ENCODE measurements at regions of chr1 and their contacts with region 1.

Region 1: GRCh38 chr1:22889213-22889827 is 83.3 kb downstream of the LACTBL1 start:
- DNase-seq: peak; percentile 44

Region 2: DNA sequence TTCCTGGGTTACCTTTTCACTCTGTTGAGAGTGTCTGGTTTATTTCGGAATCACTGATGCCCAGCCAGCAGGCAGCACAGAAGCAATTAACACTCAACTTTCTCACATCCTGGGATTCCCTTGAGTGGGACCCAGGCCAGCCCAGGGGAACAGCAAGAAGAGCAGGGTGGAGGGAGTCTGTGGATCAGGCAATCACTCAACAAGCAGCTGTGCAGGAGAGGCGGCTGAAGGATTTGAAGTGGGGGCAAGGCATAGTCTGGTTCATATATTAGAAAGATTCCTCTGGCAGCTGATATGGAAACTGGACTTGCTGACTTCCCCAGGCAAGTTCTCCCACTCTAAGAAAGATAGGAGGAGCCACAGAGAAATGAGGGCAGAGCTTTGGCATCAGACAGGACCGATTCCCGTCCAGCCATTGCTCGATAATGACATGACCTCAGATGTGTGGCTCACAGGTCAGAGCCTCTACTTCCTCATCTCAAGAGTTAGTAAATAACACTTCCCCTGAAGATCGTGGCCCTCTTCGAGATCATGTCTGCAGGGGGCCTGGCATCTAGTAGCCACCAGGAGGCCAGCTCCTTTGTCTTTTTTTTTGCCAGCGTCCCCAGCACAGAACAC is 313.7 kb before region 1 on chr1:
- in situ Hi-C with region 1: no loop called
- DNase-seq: no peak

Region 3: DNA sequence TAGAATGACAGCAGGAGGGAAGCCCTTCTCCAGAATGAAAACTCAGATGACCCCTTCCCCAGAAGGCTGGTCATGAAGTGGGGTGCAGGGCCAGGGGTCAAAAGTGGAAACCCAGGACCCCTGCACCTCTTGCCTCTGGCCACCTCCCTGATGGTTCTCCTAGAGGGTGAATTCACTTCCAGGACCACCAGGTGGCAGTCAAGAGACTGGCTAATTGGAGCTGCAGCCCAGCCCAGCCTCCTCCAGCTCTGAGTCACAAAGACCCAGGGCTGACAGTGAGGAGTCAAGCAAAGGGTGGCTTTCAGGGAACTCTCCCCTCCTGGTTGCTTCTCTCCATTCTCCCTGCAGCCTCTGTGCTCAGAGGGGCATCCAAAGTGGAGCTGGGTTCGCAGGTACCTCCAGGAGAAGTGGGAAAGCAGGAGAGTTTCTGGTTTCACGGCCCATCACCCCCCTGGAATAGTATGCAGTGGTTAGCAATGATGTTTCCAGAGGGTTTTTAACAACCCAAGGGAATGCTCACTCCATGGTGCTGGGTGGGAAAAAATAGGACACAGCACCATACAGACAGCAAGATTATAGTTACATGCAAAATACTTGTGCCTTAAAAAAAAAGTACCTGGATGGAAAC is 184.8 kb before region 1 on chr1:
- in situ Hi-C with region 1: loop called (anchors 25 kb)
- DNase-seq: peak; percentile 67

Measured in Caki2 (cell line).